ENCODE measurements at regions of chr16 and their contacts with region 1.

Region 1: GRCh38 chr16:70331588-70332358 is 14.9 kb upstream of the DDX19A start:
- DNase-seq: no peak
- ATAC-seq: peak in 6 of 8 donors; percentile 46 to 74 (median 58)
- H3K4me3 ChIP-seq: no peak overlapping the region
- H3K27ac ChIP-seq: no peak overlapping the region
- H3K4me1 ChIP-seq: peaks cover 0 to 5% (median 0%) of the 10 kb centered on the region in 9 donors
- H3K27me3 ChIP-seq: no peaks in the 10 kb centered on the region
- CTCF ChIP-seq: peak; percentile 19 to 67 (median 55)

Region 2: GRCh38 chr16:70267516-70267915 is 64.3 kb before region 1 on chr16:
- intact Hi-C with region 1: no loop called
- DNase-seq: no peak
- ATAC-seq: peak in 1 of 8 donors; percentile 46
- H3K4me3 ChIP-seq: no peak overlapping the region
- H3K27ac ChIP-seq: no peak overlapping the region
- H3K4me1 ChIP-seq: no peaks in the 10 kb centered on the region
- H3K27me3 ChIP-seq: no peaks in the 10 kb centered on the region
- CTCF ChIP-seq: peak; percentile 39 to 73 (median 64)

Region 3: GRCh38 chr16:70380861-70381603 is 49.3 kb after region 1 on chr16:
- intact Hi-C with region 1: no loop called
- DNase-seq: peak; percentile 96 to 97
- ATAC-seq: peak; percentile 94 to 98 (median 96)
- H3K4me3 ChIP-seq: peak overlapping the region; percentile 56 to 85 (median 66)
- H3K27ac ChIP-seq: peak overlapping the region; percentile 16 to 91 (median 86)
- H3K4me1 ChIP-seq: peaks cover 0 to 26% (median 18%) of the 10 kb centered on the region in 9 donors
- H3K27me3 ChIP-seq: no peaks in the 10 kb centered on the region
- CTCF ChIP-seq: peak in 6 of 9 donors; percentile 31 to 60 (median 46)

Region 4: GRCh38 chr16:70746708-70747424 is 415.1 kb after region 1 on chr16:
- intact Hi-C with region 1: loop called in 1 of 10 experiments (anchors 10 kb)
- DNase-seq: peak; percentile 43 to 79
- ATAC-seq: peak; percentile 40 to 77 (median 62)
- H3K4me3 ChIP-seq: no peak overlapping the region
- H3K27ac ChIP-seq: peak overlapping the region in 6 of 10 donors; percentile 7 to 75 (median 50)
- H3K4me1 ChIP-seq: peaks cover 29 to 70% (median 49%) of the 10 kb centered on the region in 9 donors
- H3K27me3 ChIP-seq: no peaks in the 10 kb centered on the region
- CTCF ChIP-seq: no peak

Measured in heart right ventricle (tissue), 16 donors.